ENCODE measurements at regions of chr13 and their contacts with region 1.

Region 1: DNA sequence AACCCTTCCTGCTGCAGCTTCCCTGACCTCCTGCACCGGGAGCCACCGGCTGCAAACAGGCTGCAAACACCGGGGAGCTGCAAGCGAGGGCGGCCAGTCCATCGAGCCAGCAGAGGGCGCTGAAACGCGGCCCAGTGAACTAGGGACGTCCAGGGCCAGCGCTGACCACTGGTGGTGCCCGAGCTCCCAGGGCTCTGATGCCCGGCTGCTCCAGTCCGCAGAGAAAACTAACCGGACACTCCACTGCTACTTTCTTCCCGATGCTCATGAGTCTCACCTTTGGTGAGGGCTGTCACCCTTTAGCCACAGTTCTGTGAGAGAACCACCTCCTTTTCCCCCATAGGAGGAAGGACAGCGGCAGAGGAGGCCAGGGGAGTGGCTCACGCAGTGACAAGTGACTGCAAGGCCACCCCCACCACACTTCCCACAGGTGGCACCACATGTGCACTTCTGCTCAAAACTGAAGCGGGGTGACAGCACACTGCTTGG is 82.8 kb upstream of the MTIF3 start:
- DNase-seq: peak; percentile 69
- H3K4me3 ChIP-seq: no peak overlapping the region
- H3K27ac ChIP-seq: no peak overlapping the region
- H3K4me1 ChIP-seq: no peaks in the 10 kb centered on the region
- H3K27me3 ChIP-seq: no peaks in the 10 kb centered on the region
- CTCF ChIP-seq: peak; percentile 95 to 99
- POLR2A ChIP-seq: no peak

Region 2: GRCh38 chr13:27374650-27375049 is 158.5 kb before region 1 on chr13:
- CTCF ChIA-PET with region 1: interaction called, 7 read pairs
- POLR2A ChIA-PET with region 1: no interaction called
- dilution Hi-C with region 1: no loop called
- intact Hi-C with region 1: loop called (anchors 1 kb)
- DNase-seq: peak; percentile 73
- H3K4me3 ChIP-seq: no peak overlapping the region
- H3K27ac ChIP-seq: no peak overlapping the region
- H3K4me1 ChIP-seq: no peaks in the 10 kb centered on the region
- H3K27me3 ChIP-seq: peaks cover 6 to 10% of the 10 kb centered on the region in 2 experiments
- CTCF ChIP-seq: peak; percentile 67 to 75
- POLR2A ChIP-seq: no peak

Region 3: GRCh38 chr13:27549406-27549981 is 16.3 kb after region 1 on chr13:
- CTCF ChIA-PET with region 1: interaction called, 14 read pairs
- POLR2A ChIA-PET with region 1: no interaction called
- dilution Hi-C with region 1: no loop called
- intact Hi-C with region 1: no loop called
- DNase-seq: no peak
- H3K4me3 ChIP-seq: no peak overlapping the region
- H3K27ac ChIP-seq: no peak overlapping the region
- H3K4me1 ChIP-seq: no peaks in the 10 kb centered on the region
- H3K27me3 ChIP-seq: no peaks in the 10 kb centered on the region
- CTCF ChIP-seq: no peak
- POLR2A ChIP-seq: no peak

Region 4: GRCh38 chr13:27556109-27556508 is 22.9 kb after region 1 on chr13:
- CTCF ChIA-PET with region 1: interaction called, 29 read pairs
- POLR2A ChIA-PET with region 1: no interaction called
- dilution Hi-C with region 1: no loop called
- intact Hi-C with region 1: no loop called
- DNase-seq: peak; percentile 93
- H3K4me3 ChIP-seq: no peak overlapping the region
- H3K27ac ChIP-seq: no peak overlapping the region
- H3K4me1 ChIP-seq: peaks cover 9% of the 10 kb centered on the region
- H3K27me3 ChIP-seq: no peaks in the 10 kb centered on the region
- CTCF ChIP-seq: peak; percentile 26 to 53
- POLR2A ChIP-seq: no peak

Region 5: GRCh38 chr13:27712421-27712820 is 179.2 kb after region 1 on chr13:
- CTCF ChIA-PET with region 1: interaction called, 36 read pairs
- POLR2A ChIA-PET with region 1: no interaction called
- dilution Hi-C with region 1: no loop called
- intact Hi-C with region 1: loop called (anchors 1 kb)
- DNase-seq: no peak
- H3K4me3 ChIP-seq: no peak overlapping the region
- H3K27ac ChIP-seq: no peak overlapping the region
- H3K4me1 ChIP-seq: no peaks in the 10 kb centered on the region
- H3K27me3 ChIP-seq: peaks cover 0 to 4% of the 10 kb centered on the region in 2 experiments
- CTCF ChIP-seq: no peak
- POLR2A ChIP-seq: no peak

Region 6: GRCh38 chr13:27988520-27988919 is 455.3 kb after region 1 on chr13 and contains the start of gene URAD:
- CTCF ChIA-PET with region 1: interaction called, 30 read pairs
- POLR2A ChIA-PET with region 1: no interaction called
- dilution Hi-C with region 1: no loop called
- intact Hi-C with region 1: no loop called
- DNase-seq: no peak
- H3K4me3 ChIP-seq: no peak within 1 kb of the TSS
- H3K27ac ChIP-seq: no peak within 1 kb of the TSS
- H3K4me1 ChIP-seq: no peaks in the 10 kb centered on the region
- H3K27me3 ChIP-seq: peaks cover 12 to 13% of the 10 kb centered on the region in 2 experiments
- CTCF ChIP-seq: no peak
- POLR2A ChIP-seq: no peak
- total RNA-seq, gene URAD: not detected in 2 replicates

Measured in endothelial cell of umbilical vein (primary cell).